ENCODE measurements at regions of chr4 and their contacts with region 1.

Region 1: GRCh38 chr4:110516106-110516922 is 40.4 kb downstream of the ENPEP start:
- DNase-seq: peak; percentile 75 to 88 (median 80)
- ATAC-seq: peak; percentile 97 to 99 (median 98)
- H3K4me3 ChIP-seq: peak overlapping the region; percentile 12 to 42 (median 24)
- H3K27ac ChIP-seq: peak overlapping the region in 2 of 4 donors; percentile 34 to 59
- H3K4me1 ChIP-seq: peaks cover 0 to 5% (median 0%) of the 10 kb centered on the region in 3 donors
- H3K27me3 ChIP-seq: no peaks in the 10 kb centered on the region
- CTCF ChIP-seq: peak; percentile 50 to 73 (median 61)

Region 2: GRCh38 chr4:109998867-109999584 is 517.3 kb before region 1 on chr4:
- intact Hi-C with region 1: loop called in 2 of 3 experiments (anchors 5 to 10 kb)
- DNase-seq: no peak
- ATAC-seq: peak in 3 of 4 donors; percentile 78 to 86 (median 81)
- H3K4me3 ChIP-seq: no peak overlapping the region
- H3K27ac ChIP-seq: no peak overlapping the region
- H3K4me1 ChIP-seq: no peaks in the 10 kb centered on the region
- H3K27me3 ChIP-seq: no peaks in the 10 kb centered on the region
- CTCF ChIP-seq: peak in 3 of 4 donors; percentile 42 to 46 (median 45)

Region 3: GRCh38 chr4:110005461-110006056 is 510.8 kb before region 1 on chr4:
- intact Hi-C with region 1: loop called in 1 of 3 experiments (anchors 10 kb)
- DNase-seq: no peak
- ATAC-seq: peak in 3 of 4 donors; percentile 77 to 85 (median 84)
- H3K4me3 ChIP-seq: no peak overlapping the region
- H3K27ac ChIP-seq: no peak overlapping the region
- H3K4me1 ChIP-seq: no peaks in the 10 kb centered on the region
- H3K27me3 ChIP-seq: no peaks in the 10 kb centered on the region
- CTCF ChIP-seq: peak in 2 of 4 donors; percentile 38 to 65

Region 4: DNA sequence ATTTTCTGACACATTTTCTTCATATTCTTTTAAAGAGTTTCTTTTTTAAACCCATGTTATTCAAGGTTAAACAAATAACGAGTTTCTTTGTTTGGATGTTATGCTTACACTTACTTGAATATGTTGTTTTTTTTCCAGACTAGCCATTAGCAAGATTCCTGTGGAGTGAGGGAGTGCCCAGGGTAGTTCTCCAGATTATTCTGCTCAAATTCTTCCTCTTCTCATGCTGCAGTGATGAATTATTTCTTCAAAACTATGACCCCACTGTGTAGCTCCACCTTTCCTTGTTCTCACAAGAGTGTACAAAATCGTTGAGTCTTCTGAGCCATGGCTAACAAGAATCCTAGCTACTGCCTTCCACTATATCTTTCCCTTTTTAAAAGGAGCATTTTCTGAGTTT is 183.8 kb before region 1 on chr4:
- intact Hi-C with region 1: no loop called
- DNase-seq: no peak
- ATAC-seq: no peak
- H3K4me3 ChIP-seq: no peak overlapping the region
- H3K27ac ChIP-seq: no peak overlapping the region
- H3K4me1 ChIP-seq: no peaks in the 10 kb centered on the region
- H3K27me3 ChIP-seq: no peaks in the 10 kb centered on the region
- CTCF ChIP-seq: no peak

Region 5: DNA sequence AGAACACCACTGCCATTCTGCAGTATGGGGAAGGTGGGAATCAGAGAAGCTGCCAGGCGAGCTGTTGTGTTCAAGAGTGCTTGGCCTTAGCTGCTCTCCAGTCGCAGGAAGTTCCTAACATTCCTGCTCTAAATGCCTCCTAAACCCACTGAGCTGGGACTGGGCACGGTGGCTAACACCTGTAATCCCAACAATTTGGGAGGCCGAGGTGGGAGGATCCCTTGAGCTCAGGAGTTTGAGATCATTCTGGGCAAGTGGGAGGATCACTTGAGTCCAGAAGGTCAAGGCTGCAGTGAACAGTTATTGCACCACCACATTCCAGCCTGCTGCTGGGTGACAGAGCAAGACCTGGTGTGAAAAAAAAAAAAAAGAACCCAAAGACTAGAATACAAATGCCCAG is 938.6 kb after region 1 on chr4:
- intact Hi-C with region 1: no loop called
- DNase-seq: peak in 1 of 6 donors; percentile 6
- ATAC-seq: no peak
- H3K4me3 ChIP-seq: no peak overlapping the region
- H3K27ac ChIP-seq: no peak overlapping the region
- H3K4me1 ChIP-seq: no peaks in the 10 kb centered on the region
- H3K27me3 ChIP-seq: no peaks in the 10 kb centered on the region
- CTCF ChIP-seq: no peak

Measured in pancreas (tissue), 10 donors.